K562 (cell line): ENCODE measurements at regions of chr19 and their contacts with region 1.

Region 1: GRCh38 chr19:13880059-13881043 is 3.4 kb downstream of the NANOS3 start:
- DNase-seq: peak; percentile 95 to 98 (median 96)
- ATAC-seq: peak; percentile 98
- H3K4me3 ChIP-seq: no peak overlapping the region
- H3K27ac ChIP-seq: peak overlapping the region; percentile 78
- H3K4me1 ChIP-seq: peaks cover 17 to 57% of the 10 kb centered on the region in 2 experiments
- H3K27me3 ChIP-seq: no peaks in the 10 kb centered on the region; a peak in 1 of 5 replicates
- CTCF ChIP-seq: peak; percentile 99 to 100 (median 99)
- EP300 ChIP-seq: peak; percentile 70
- POLR2A ChIP-seq: peak; percentile 60
- RAD21 ChIP-seq: peak; percentile 100

Region 2: GRCh38 chr19:13839130-13839937 is 41.0 kb before region 1 on chr19:
- CTCF ChIA-PET with region 1: no interaction called
- POLR2A ChIA-PET with region 1: no interaction called
- in situ Hi-C with region 1: no loop called
- intact Hi-C with region 1: no loop called
- DNase-seq: peak; percentile 69 to 92 (median 78)
- ATAC-seq: peak; percentile 82
- H3K4me3 ChIP-seq: peak overlapping the region; percentile 72
- H3K27ac ChIP-seq: peak overlapping the region; percentile 97
- H3K4me1 ChIP-seq: peaks cover 37 to 82% of the 10 kb centered on the region in 2 experiments
- H3K27me3 ChIP-seq: no peaks in the 10 kb centered on the region
- CTCF ChIP-seq: peak in 1 of 3 experiments; percentile 14; a peak in 1 of 6 replicates
- EP300 ChIP-seq: peak; percentile 51
- POLR2A ChIP-seq: peak; percentile 88
- RAD21 ChIP-seq: no peak

Region 3: GRCh38 chr19:13952154-13953035 is 72.0 kb after region 1 on chr19 and contains the start of gene DCAF15:
- CTCF ChIA-PET with region 1: interaction called, 3 read pairs
- POLR2A ChIA-PET with region 1: interaction called, 3 read pairs
- in situ Hi-C with region 1: no loop called
- intact Hi-C with region 1: loop called (anchors 1 kb)
- DNase-seq: peak; percentile 99 to 100 (median 100)
- ATAC-seq: peak; percentile 99
- H3K4me3 ChIP-seq: peak within 1 kb of the TSS; percentile 98
- H3K27ac ChIP-seq: peak within 1 kb of the TSS; percentile 89
- H3K4me1 ChIP-seq: peaks cover 7 to 42% of the 10 kb centered on the region in 2 experiments; a peak in 4 of 5 replicates
- H3K27me3 ChIP-seq: no peaks in the 10 kb centered on the region
- CTCF ChIP-seq: no peak
- EP300 ChIP-seq: no peak
- POLR2A ChIP-seq: peak; percentile 90
- RAD21 ChIP-seq: no peak
- polyA plus RNA-seq, gene DCAF15: 0.17 to 0.56 TPM

Region 4: GRCh38 chr19:14031719-14032480 is 151.5 kb after region 1 on chr19 and contains the start of gene IL27RA:
- CTCF ChIA-PET with region 1: interaction called, 6 read pairs
- POLR2A ChIA-PET with region 1: interaction called, 5 read pairs
- in situ Hi-C with region 1: no loop called
- intact Hi-C with region 1: loop called (anchors 1 kb)
- DNase-seq: peak; percentile 79 to 88 (median 82)
- ATAC-seq: peak; percentile 83
- H3K4me3 ChIP-seq: peak within 1 kb of the TSS; percentile 56
- H3K27ac ChIP-seq: peak within 1 kb of the TSS; percentile 81
- H3K4me1 ChIP-seq: peaks cover 20 to 47% of the 10 kb centered on the region in 2 experiments; a peak in 4 of 5 replicates
- H3K27me3 ChIP-seq: no peaks in the 10 kb centered on the region
- CTCF ChIP-seq: peak; percentile 80 to 91 (median 84)
- EP300 ChIP-seq: no peak
- POLR2A ChIP-seq: peak; percentile 78
- RAD21 ChIP-seq: peak; percentile 74 to 76
- polyA plus RNA-seq, gene IL27RA: 1.9 to 2.1 TPM

Region 5: DNA sequence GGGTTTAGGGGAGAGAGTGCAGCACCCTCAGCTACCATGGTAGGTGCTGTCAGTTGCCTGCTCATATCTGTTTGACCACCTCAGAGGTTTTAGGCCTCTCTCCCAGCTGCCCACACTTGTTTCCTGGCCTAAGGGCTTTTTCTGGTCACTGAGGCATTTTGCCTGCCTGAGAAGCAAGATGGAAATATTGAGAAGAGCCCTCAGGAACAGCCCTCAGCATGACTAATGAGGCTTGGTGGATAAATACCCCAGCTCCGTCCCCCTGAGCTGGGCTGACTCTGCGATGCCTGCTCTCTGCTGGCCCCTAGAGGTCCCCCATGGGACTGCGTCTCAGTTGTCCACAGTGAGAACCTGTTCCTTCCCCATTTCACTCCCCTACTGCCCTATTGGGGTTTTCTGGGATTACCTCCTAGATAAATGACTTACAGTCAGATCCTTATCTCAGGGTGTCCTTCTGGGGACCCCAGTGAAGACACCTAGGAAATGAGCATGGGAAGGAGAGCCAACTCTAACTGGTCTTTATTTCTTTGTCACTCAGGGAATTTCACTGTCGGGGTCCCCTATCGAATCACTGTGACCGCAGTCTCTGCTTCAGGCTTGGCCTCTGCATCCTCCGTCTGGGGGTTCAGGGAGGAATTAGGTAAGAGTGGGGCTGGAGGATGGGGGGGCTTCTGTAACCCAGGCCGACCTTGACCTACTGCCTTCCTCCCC is 168.2 kb after region 1 on chr19:
- CTCF ChIA-PET with region 1: interaction called, 17 read pairs
- POLR2A ChIA-PET with region 1: no interaction called
- in situ Hi-C with region 1: no loop called
- intact Hi-C with region 1: no loop called
- DNase-seq: peak; percentile 77 to 86 (median 78)
- ATAC-seq: peak; percentile 94
- H3K4me3 ChIP-seq: no peak overlapping the region
- H3K27ac ChIP-seq: no peak overlapping the region
- H3K4me1 ChIP-seq: peaks cover 0 to 16% of the 10 kb centered on the region in 2 experiments; a peak in 2 of 5 replicates
- H3K27me3 ChIP-seq: no peaks in the 10 kb centered on the region
- CTCF ChIP-seq: peak; percentile 88 to 96 (median 89)
- EP300 ChIP-seq: no peak
- POLR2A ChIP-seq: no peak
- RAD21 ChIP-seq: peak; percentile 31 to 62; a peak in 2 of 4 replicates

Region 6: GRCh38 chr19:14073261-14073924 is 193.0 kb after region 1 on chr19:
- CTCF ChIA-PET with region 1: interaction called, 39 read pairs
- POLR2A ChIA-PET with region 1: interaction called, 3 read pairs
- in situ Hi-C with region 1: loop called (anchors 5 kb)
- intact Hi-C with region 1: loop called (anchors 1 kb)
- DNase-seq: peak; percentile 82 to 85 (median 83)
- ATAC-seq: peak; percentile 76
- H3K4me3 ChIP-seq: peak overlapping the region; percentile 55
- H3K27ac ChIP-seq: peak overlapping the region; percentile 68
- H3K4me1 ChIP-seq: peaks cover 9 to 48% of the 10 kb centered on the region in 2 experiments; a peak in 4 of 5 replicates
- H3K27me3 ChIP-seq: no peaks in the 10 kb centered on the region
- CTCF ChIP-seq: peak; percentile 17 to 88 (median 75); a peak in 5 of 6 replicates
- EP300 ChIP-seq: no peak
- POLR2A ChIP-seq: 0 out of 2 replicates have a peak, but pooled peaks have one; percentile 32
- RAD21 ChIP-seq: peak in 1 of 2 experiments; percentile 65; a peak in 3 of 4 replicates

Region 7: GRCh38 chr19:14117668-14118164 is 237.4 kb after region 1 on chr19 and contains the start of gene PRKACA:
- CTCF ChIA-PET with region 1: interaction called, 12 read pairs
- POLR2A ChIA-PET with region 1: no interaction called
- in situ Hi-C with region 1: no loop called
- intact Hi-C with region 1: no loop called
- DNase-seq: peak; percentile 98 to 99 (median 98)
- ATAC-seq: peak; percentile 97
- H3K4me3 ChIP-seq: peak within 1 kb of the TSS; percentile 90
- H3K27ac ChIP-seq: peak within 1 kb of the TSS; percentile 89
- H3K4me1 ChIP-seq: peaks cover 47 to 57% of the 10 kb centered on the region in 2 experiments; a peak in 4 of 5 replicates
- H3K27me3 ChIP-seq: no peaks in the 10 kb centered on the region
- CTCF ChIP-seq: no peak
- EP300 ChIP-seq: no peak
- POLR2A ChIP-seq: no peak
- RAD21 ChIP-seq: no peak
- polyA plus RNA-seq, gene PRKACA: 1.2 to 1.7 TPM

Region 8: GRCh38 chr19:14347999-14348889 is 467.9 kb after region 1 on chr19:
- CTCF ChIA-PET with region 1: interaction called, 9 read pairs
- POLR2A ChIA-PET with region 1: no interaction called
- in situ Hi-C with region 1: loop called (anchors 5 kb)
- intact Hi-C with region 1: loop called (anchors 5 kb)
- DNase-seq: peak; percentile 80 to 91 (median 89)
- ATAC-seq: peak; percentile 92
- H3K4me3 ChIP-seq: peak overlapping the region; percentile 35
- H3K27ac ChIP-seq: no peak overlapping the region; the same call in 2 of the 3 replicates
- H3K4me1 ChIP-seq: peaks cover 3 to 14% of the 10 kb centered on the region in 2 experiments; a peak in 3 of 5 replicates
- H3K27me3 ChIP-seq: peaks cover 0 to 13% of the 10 kb centered on the region in 2 experiments; a peak in 2 of 5 replicates
- CTCF ChIP-seq: peak; percentile 93 to 96 (median 93)
- EP300 ChIP-seq: no peak
- POLR2A ChIP-seq: no peak
- RAD21 ChIP-seq: peak; percentile 93 to 96